H1 (cell line): ENCODE measurements at regions of chr21 and their contacts with region 1.

Region 1: GRCh38 chr21:36927719-36928117 is 38.8 kb downstream of the HLCS start:
- DNase-seq: peak; percentile 61 to 88
- H3K4me3 ChIP-seq: no peak overlapping the region
- H3K27ac ChIP-seq: no peak overlapping the region
- H3K4me1 ChIP-seq: no peaks in the 10 kb centered on the region
- H3K27me3 ChIP-seq: no peaks in the 10 kb centered on the region
- CTCF ChIP-seq: peak; percentile 84 to 87 (median 84)
- EP300 ChIP-seq: no peak
- POLR2A ChIP-seq: no peak
- RAD21 ChIP-seq: peak; percentile 90

Region 2: GRCh38 chr21:36917471-36918158 is 10.1 kb before region 1 on chr21:
- CTCF ChIA-PET with region 1: interaction called, 68 read pairs
- POLR2A ChIA-PET with region 1: no interaction called
- DNase-seq: peak; percentile 34 to 53
- H3K4me3 ChIP-seq: no peak overlapping the region
- H3K27ac ChIP-seq: no peak overlapping the region
- H3K4me1 ChIP-seq: peaks cover 5 to 18% (median 11%) of the 10 kb centered on the region in 4 experiments
- H3K27me3 ChIP-seq: no peaks in the 10 kb centered on the region; a peak in 1 of 7 replicates
- CTCF ChIP-seq: peak; percentile 54 to 75 (median 72)
- EP300 ChIP-seq: no peak
- POLR2A ChIP-seq: no peak
- RAD21 ChIP-seq: peak; percentile 67 to 77